ENCODE measurements at regions of chr1 and their contacts with region 1.

Region 1: GRCh38 chr1:27489910-27490741 is at the start of gene WASF2:
- DNase-seq: peak; percentile 96
- H3K4me3 Mint-ChIP-seq: peak within 1 kb of the TSS; percentile 85
- H3K27ac Mint-ChIP-seq: peak within 1 kb of the TSS; percentile 100
- H3K4me1 Mint-ChIP-seq: peaks cover 14% of the 10 kb centered on the region
- H3K27me3 Mint-ChIP-seq: no peaks in the 10 kb centered on the region
- CTCF ChIP-seq: no peak
- total RNA-seq, gene WASF2: 131 and 154 TPM in 2 replicates

Region 2: DNA sequence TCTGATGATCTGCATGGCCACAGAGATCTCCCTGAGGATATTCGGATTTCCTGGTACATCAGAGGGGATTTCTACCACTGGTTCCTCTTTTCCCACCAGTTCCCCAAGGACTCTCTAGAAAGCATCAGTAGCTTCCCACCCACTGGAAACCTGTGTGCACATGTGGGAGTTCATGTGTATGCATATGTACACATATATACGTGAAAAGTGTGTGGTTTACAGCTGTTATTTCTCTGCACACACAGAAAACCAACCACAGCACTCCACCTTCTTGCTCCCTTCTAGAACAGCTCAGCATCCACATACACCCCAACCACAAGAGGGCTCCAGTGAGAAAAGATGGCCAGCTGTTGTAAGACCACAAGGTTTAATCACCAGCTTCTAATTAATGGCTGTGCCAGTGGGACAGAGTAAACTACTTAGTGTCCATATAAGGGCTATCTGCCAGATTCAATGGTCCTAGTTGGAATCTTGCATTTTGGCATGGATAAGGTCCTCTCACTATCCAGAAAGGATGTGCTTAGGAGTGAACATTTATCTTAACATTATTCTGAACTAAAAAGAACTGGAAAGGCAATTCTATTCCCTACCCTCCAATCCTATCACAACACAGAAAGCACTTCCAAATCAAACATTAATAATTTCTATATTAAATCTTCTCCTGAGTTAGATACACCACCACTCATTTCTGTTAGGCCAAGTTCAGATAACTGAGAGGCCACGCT is 73.6 kb before region 1 on chr1:
- CTCF ChIA-PET with region 1: interaction called, 4 read pairs
- POLR2A ChIA-PET with region 1: interaction called, 12 read pairs
- intact Hi-C with region 1: no loop called
- DNase-seq: peak; percentile 73
- H3K4me3 Mint-ChIP-seq: no peak overlapping the region
- H3K27ac Mint-ChIP-seq: peak overlapping the region; percentile 19
- H3K4me1 Mint-ChIP-seq: peaks cover 12% of the 10 kb centered on the region
- H3K27me3 Mint-ChIP-seq: no peaks in the 10 kb centered on the region
- CTCF ChIP-seq: peak; percentile 58

Region 3: DNA sequence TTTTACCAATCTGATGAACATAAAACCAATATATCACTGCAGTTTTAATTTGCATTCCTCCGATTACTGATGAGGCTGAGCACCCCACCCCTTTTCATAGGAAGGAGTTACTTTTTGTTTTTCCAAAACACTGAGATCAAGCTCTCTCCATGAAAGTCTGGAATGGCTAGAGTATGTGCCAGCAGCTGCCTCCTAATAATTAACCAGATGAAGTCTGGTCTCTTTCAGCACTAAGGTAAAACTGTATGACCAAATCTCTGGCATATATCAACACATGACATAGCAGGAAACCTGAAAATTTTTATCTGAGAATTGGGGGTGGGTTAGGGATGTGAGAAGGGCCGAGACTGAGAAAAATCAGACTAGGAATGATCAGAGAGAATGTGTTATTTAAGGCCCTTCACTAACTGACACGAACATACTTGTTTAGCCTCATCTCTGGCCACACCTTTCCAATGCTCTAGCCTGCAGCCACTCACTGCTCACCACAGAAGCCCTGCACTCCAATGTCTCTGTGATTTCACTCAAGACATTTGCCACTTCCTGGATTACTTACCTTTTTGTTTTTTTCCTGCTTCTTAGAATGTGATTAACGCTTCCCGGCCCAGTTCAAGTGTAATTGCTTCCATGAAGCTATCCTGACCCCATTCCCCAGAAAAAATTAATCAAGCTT is 34.9 kb before region 1 on chr1:
- CTCF ChIA-PET with region 1: no interaction called
- POLR2A ChIA-PET with region 1: interaction called, 24 read pairs
- intact Hi-C with region 1: no loop called
- DNase-seq: no peak
- H3K4me3 Mint-ChIP-seq: peak overlapping the region; percentile 6
- H3K27ac Mint-ChIP-seq: peak overlapping the region; percentile 50
- H3K4me1 Mint-ChIP-seq: peaks cover 10% of the 10 kb centered on the region
- H3K27me3 Mint-ChIP-seq: no peaks in the 10 kb centered on the region
- CTCF ChIP-seq: no peak

Region 4: GRCh38 chr1:27517907-27518718 is 28.0 kb after region 1 on chr1:
- CTCF ChIA-PET with region 1: no interaction called
- POLR2A ChIA-PET with region 1: interaction called, 17 read pairs
- intact Hi-C with region 1: no loop called
- DNase-seq: peak; percentile 74
- H3K4me3 Mint-ChIP-seq: no peak overlapping the region
- H3K27ac Mint-ChIP-seq: peak overlapping the region; percentile 39
- H3K4me1 Mint-ChIP-seq: peaks cover 43% of the 10 kb centered on the region
- H3K27me3 Mint-ChIP-seq: no peaks in the 10 kb centered on the region
- CTCF ChIP-seq: no peak

Region 5: DNA sequence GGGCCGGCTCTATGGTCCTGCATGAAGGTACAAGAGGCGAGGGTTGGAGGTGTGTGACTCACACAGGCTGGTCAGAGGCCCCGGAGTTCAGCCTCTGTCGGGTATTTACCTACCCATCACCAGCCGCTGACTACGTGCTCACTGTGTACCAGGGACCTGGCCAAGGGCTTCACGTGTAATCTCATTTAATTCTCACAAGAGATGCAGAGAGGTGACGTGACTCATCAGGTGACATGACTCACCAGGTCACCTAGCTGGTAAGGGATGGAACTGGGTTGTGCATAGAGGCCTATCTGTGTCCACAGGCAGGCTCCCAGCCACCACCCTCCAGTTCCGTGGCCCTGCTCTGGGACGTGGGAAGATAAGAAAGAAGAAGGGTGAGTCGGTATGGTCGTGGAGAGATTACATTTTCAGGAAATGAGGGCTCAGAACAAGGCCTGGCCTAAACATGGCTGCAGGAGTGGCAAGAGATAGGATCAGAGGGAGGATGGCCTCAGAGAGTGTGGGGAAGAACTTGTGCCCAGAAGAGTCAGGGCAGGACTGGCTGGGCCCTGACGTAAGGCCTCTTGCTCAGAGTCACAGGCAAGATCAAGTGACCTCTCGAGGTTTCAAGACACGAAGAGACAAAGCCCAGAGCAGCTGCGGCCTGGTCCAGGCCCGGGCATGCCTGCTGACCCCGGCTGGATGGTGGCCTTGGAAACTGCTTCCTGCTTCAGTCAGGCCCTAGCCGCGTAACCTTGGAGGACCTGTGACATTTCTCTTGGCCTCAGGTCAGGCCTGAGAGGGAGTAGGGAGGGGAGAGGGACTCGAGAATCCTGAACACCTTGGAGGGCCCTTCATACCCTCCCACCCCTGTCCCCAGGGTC is 52.5 kb after region 1 on chr1:
- CTCF ChIA-PET with region 1: interaction called, 4 read pairs
- POLR2A ChIA-PET with region 1: interaction called, 26 read pairs
- intact Hi-C with region 1: no loop called
- DNase-seq: peak; percentile 86
- H3K4me3 Mint-ChIP-seq: peak overlapping the region; percentile 3
- H3K27ac Mint-ChIP-seq: peak overlapping the region; percentile 87
- H3K4me1 Mint-ChIP-seq: peaks cover 43% of the 10 kb centered on the region
- H3K27me3 Mint-ChIP-seq: no peaks in the 10 kb centered on the region
- CTCF ChIP-seq: no peak

Region 6: DNA sequence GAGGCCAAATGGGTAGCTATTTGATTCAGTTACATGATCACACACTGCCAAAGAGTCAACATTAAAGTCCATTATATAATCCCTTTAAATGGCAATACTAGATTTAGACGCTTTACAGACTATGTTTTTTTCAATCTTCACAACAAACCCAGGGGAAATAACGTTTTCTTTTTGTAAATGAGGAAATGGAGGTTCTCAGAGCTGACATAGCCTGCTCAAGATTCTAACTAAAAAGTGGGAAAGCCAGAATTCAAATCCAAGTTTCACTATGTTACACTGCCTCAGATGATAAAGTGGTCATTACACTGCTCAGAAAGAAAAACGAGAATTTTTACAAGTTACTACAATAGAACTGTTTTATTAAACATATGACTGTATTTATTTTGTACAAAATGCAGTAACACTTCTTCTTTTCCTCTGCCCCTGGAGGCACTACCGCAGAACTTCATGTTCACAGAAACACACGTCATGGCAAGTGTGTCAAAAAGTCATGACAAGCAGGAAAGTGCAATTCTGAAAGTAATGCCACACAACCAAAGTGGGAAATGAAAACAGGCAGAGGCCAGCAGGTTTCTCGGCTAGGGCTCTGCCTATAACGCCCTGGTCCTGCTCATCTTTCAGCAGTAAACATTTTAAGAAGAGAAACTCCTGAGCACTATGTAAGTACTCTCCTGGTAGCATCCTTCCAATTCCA is 401.2 kb after region 1 on chr1:
- CTCF ChIA-PET with region 1: no interaction called
- POLR2A ChIA-PET with region 1: no interaction called
- intact Hi-C with region 1: no loop called
- DNase-seq: no peak
- H3K4me3 Mint-ChIP-seq: no peak overlapping the region
- H3K27ac Mint-ChIP-seq: no peak overlapping the region
- H3K4me1 Mint-ChIP-seq: no peaks in the 10 kb centered on the region
- H3K27me3 Mint-ChIP-seq: no peaks in the 10 kb centered on the region
- CTCF ChIP-seq: no peak